PC-9 (cell line): ENCODE measurements at regions of chr18 and their contacts with region 1.

Region 1: GRCh38 chr18:58043491-58044379 is at the start of gene NEDD4L:
- DNase-seq: peak; percentile 72 to 80
- H3K4me3 ChIP-seq: peak within 1 kb of the TSS; percentile 91
- H3K27ac ChIP-seq: peak within 1 kb of the TSS; percentile 77
- H3K4me1 ChIP-seq: peaks cover 27% of the 10 kb centered on the region
- H3K27me3 ChIP-seq: no peaks in the 10 kb centered on the region
- CTCF ChIP-seq: peak; percentile 91
- total RNA-seq, gene NEDD4L: 57.4 and 58.9 TPM in 2 replicates

Region 2: DNA sequence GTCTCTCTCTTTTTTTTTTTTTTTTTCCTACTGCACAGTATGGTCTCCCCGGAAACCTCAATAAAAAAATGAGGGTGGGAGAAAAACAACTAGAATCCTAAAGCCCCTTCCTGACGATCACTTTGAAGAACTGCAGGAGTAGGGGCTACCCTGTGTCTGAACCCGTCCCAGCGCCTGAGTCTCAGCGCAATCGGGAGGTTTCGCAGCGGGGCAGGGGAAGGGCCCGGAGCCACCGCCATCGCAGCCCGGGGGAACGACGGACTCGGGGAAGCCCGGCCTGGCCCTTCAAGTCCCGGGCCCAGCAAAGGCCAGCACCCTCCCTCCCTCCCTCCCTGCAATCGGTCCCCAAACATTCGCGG is 422.5 kb before region 1 on chr18:
- CTCF ChIA-PET with region 1: no interaction called
- POLR2A ChIA-PET with region 1: no interaction called
- intact Hi-C with region 1: loop called (anchors 5 kb)
- DNase-seq: no peak
- H3K4me3 ChIP-seq: peak overlapping the region; percentile 95
- H3K27ac ChIP-seq: peak overlapping the region; percentile 75
- H3K4me1 ChIP-seq: peaks cover 14% of the 10 kb centered on the region
- H3K27me3 ChIP-seq: no peaks in the 10 kb centered on the region
- CTCF ChIP-seq: no peak

Region 3: GRCh38 chr18:57789090-57789489 is 254.6 kb before region 1 on chr18:
- CTCF ChIA-PET with region 1: no interaction called
- POLR2A ChIA-PET with region 1: no interaction called
- intact Hi-C with region 1: no loop called
- DNase-seq: peak in 1 of 2 experiments; percentile 91
- H3K4me3 ChIP-seq: peak overlapping the region; percentile 48; the same call in 1 of the 2 replicates
- H3K27ac ChIP-seq: peak overlapping the region; percentile 97
- H3K4me1 ChIP-seq: peaks cover 96% of the 10 kb centered on the region
- H3K27me3 ChIP-seq: no peaks in the 10 kb centered on the region
- CTCF ChIP-seq: no peak

Region 4: GRCh38 chr18:57881818-57882413 is 161.8 kb before region 1 on chr18:
- CTCF ChIA-PET with region 1: no interaction called
- POLR2A ChIA-PET with region 1: no interaction called
- intact Hi-C with region 1: loop called (anchors 1 kb)
- DNase-seq: peak; percentile 55 to 63
- H3K4me3 ChIP-seq: no peak overlapping the region
- H3K27ac ChIP-seq: no peak overlapping the region
- H3K4me1 ChIP-seq: peaks cover 5% of the 10 kb centered on the region; the same call in 1 of the 2 replicates
- H3K27me3 ChIP-seq: no peaks in the 10 kb centered on the region
- CTCF ChIP-seq: peak; percentile 93

Region 5: DNA sequence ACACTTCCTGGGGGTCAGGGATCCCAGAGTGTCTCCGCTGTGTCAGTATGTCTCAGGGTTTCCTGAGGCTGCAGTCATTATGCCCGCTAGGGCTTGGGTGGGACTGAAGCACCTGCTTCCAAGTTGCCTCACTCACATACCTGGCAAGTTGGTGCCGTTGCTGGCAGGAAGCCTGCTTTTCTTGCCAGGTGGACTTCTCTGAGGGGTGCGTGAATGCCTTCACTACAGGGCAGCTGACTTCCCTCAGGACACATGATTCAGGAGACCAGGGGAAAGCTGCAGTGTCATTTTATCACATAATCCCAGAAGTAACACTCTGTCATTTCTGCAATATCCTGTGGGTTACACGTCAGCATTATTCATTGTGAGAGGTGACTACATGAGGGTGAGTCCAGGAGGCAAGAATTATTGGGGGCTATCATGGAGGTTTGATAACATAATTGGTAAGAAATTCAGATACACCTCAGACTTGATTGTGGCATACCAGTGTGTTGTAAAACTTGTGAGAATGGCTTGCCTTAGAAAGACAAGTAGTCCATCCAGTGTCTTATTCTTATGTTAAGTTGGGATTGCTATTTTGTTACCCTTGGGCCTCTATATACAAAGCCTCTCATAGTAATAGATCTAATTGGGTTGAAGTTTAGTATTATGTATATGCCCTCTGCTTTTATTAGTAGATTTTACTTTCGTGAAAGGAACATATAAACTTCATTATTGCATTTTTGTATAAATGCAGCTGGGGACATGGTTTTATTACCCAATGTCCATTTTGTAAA is 44.4 kb after region 1 on chr18:
- CTCF ChIA-PET with region 1: no interaction called
- POLR2A ChIA-PET with region 1: no interaction called
- intact Hi-C with region 1: loop called (anchors 1 kb)
- DNase-seq: peak; percentile 86 to 100
- H3K4me3 ChIP-seq: no peak overlapping the region; the same call in 1 of the 2 replicates
- H3K27ac ChIP-seq: peak overlapping the region; percentile 97
- H3K4me1 ChIP-seq: peaks cover 78% of the 10 kb centered on the region
- H3K27me3 ChIP-seq: no peaks in the 10 kb centered on the region
- CTCF ChIP-seq: no peak

Region 6: GRCh38 chr18:58135701-58136331 is 92.1 kb after region 1 on chr18:
- CTCF ChIA-PET with region 1: no interaction called
- POLR2A ChIA-PET with region 1: no interaction called
- intact Hi-C with region 1: loop called (anchors 5 kb)
- DNase-seq: peak; percentile 41 to 63
- H3K4me3 ChIP-seq: no peak overlapping the region
- H3K27ac ChIP-seq: no peak overlapping the region
- H3K4me1 ChIP-seq: peaks cover 27% of the 10 kb centered on the region
- H3K27me3 ChIP-seq: no peaks in the 10 kb centered on the region
- CTCF ChIP-seq: peak; percentile 88

Region 7: GRCh38 chr18:58321986-58322385 is 278.3 kb after region 1 on chr18:
- CTCF ChIA-PET with region 1: no interaction called
- POLR2A ChIA-PET with region 1: no interaction called
- intact Hi-C with region 1: loop called (anchors 1 kb)
- DNase-seq: peak; percentile 61 to 86
- H3K4me3 ChIP-seq: no peak overlapping the region
- H3K27ac ChIP-seq: peak overlapping the region; percentile 58
- H3K4me1 ChIP-seq: peaks cover 12% of the 10 kb centered on the region
- H3K27me3 ChIP-seq: no peaks in the 10 kb centered on the region
- CTCF ChIP-seq: peak; percentile 68